ENCODE measurements at regions of chr2 and their contacts with region 1.

Region 1: GRCh38 chr2:68943581-68944568 is 8.8 kb downstream of the GKN2 start:
- DNase-seq: peak in 1 of 2 donors; percentile 80
- H3K4me3 ChIP-seq: no peak overlapping the region
- H3K27ac ChIP-seq: peak overlapping the region in 1 of 2 donors; percentile 13
- H3K4me1 ChIP-seq: peaks cover 0 to 3% of the 10 kb centered on the region in 2 donors
- H3K27me3 ChIP-seq: no peaks in the 10 kb centered on the region
- CTCF ChIP-seq: peak; percentile 72 to 86 (median 83)

Region 2: DNA sequence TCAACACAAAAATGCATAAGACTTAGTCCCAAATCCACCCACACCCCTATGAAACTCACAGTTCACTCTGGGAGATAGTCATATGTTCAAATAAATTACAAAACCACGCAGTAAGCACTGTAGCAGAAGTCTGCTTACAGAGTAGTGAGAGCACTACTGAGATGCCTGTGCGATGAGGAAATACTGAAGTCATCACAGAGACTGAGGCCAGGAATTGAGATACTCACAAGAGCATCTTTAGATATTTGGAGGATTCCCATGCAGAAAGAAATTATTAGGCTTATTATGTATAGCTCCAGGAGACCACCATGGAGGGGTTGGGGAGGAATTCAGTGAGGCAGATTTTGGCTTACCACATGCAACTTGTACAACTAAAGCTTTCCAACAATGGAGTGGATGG is 151.4 kb after region 1 on chr2:
- intact Hi-C with region 1: loop called (anchors 10 kb)
- DNase-seq: no peak
- H3K4me3 ChIP-seq: no peak overlapping the region
- H3K27ac ChIP-seq: peak overlapping the region; percentile 6 to 9
- H3K4me1 ChIP-seq: peaks cover 0 to 16% of the 10 kb centered on the region in 2 donors
- H3K27me3 ChIP-seq: no peaks in the 10 kb centered on the region
- CTCF ChIP-seq: no peak

Region 3: GRCh38 chr2:69177785-69178636 is 234.1 kb after region 1 on chr2:
- intact Hi-C with region 1: loop called (anchors 10 kb)
- DNase-seq: peak; percentile 93 to 97
- H3K4me3 ChIP-seq: peak overlapping the region; percentile 26 to 32
- H3K27ac ChIP-seq: peak overlapping the region; percentile 92 to 96
- H3K4me1 ChIP-seq: peaks cover 13 to 41% of the 10 kb centered on the region in 2 donors
- H3K27me3 ChIP-seq: no peaks in the 10 kb centered on the region
- CTCF ChIP-seq: no peak

Region 4: GRCh38 chr2:69306822-69307578 is 363.1 kb after region 1 on chr2:
- intact Hi-C with region 1: loop called (anchors 1 kb)
- DNase-seq: peak; percentile 33 to 92
- H3K4me3 ChIP-seq: peak overlapping the region; percentile 64 to 75
- H3K27ac ChIP-seq: peak overlapping the region; percentile 81 to 82
- H3K4me1 ChIP-seq: peaks cover 4 to 42% of the 10 kb centered on the region in 2 donors
- H3K27me3 ChIP-seq: no peaks in the 10 kb centered on the region
- CTCF ChIP-seq: peak; percentile 78 to 89 (median 86)

Region 5: DNA sequence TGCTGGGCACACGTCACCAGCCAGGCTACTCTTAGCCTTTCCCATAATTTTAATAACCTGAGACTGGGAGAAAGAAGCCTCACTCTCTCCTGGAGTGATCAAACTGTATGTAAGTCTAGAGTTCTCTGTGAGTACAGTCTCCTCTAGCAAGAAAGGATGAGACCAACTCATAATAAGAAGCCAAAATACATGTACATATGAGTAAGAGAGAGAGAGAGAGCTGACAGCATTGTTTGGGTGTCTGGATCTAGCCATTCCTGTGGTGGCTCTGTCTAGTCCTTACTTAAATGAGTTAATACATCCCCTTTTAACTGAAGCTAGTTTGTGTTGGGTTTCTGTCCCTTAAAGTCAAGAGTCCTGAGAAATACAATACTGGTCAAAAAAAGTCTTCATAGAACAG is 772.1 kb after region 1 on chr2:
- intact Hi-C with region 1: loop called (anchors 5 kb)
- DNase-seq: no peak
- H3K4me3 ChIP-seq: no peak overlapping the region
- H3K27ac ChIP-seq: no peak overlapping the region
- H3K4me1 ChIP-seq: no peaks in the 10 kb centered on the region
- H3K27me3 ChIP-seq: no peaks in the 10 kb centered on the region
- CTCF ChIP-seq: no peak

Measured in ascending aorta (tissue), 2 donors.